ENCODE measurements at regions of chr16 and their contacts with region 1.

Region 1: DNA sequence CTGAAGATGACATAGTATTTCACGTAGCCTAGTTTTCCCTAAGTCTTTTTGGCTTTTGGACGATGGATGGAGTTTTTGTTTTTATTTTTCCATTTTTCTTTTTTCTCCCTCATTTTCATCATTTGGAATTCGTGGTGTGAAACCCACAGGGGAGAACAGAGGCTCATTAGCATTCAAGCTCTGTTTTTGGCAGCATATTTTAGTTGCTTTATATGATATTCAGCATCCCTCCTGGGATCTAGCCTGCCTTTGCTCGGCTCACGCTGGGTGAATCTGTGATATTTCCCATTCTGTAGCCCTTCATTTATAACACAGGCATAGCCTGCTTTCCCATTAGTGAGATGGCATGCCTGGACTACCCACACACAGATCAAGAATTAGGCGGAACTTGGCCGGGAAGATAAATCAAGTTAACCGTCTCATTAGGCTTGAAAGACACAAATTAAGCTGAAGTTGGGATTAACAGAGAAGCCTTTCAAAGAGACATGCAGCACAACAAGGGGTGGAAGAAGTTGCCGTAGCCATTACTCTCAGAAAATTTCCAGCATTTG is 20.1 kb upstream of the CLEC19A start:
- DNase-seq: no peak
- ATAC-seq: no peak
- H3K4me3 ChIP-seq: no peak overlapping the region
- H3K27ac ChIP-seq: no peak overlapping the region
- H3K4me1 ChIP-seq: no peaks in the 10 kb centered on the region
- H3K27me3 ChIP-seq: no peaks in the 10 kb centered on the region
- CTCF ChIP-seq: no peak
- POLR2A ChIP-seq: no peak
- RAD21 ChIP-seq: no peak

Region 2: GRCh38 chr16:19196871-19197270 is 68.6 kb before region 1 on chr16:
- CTCF ChIA-PET with region 1: no interaction called
- POLR2A ChIA-PET with region 1: no interaction called
- dilution Hi-C with region 1: no loop called
- in situ Hi-C with region 1: no loop called
- intact Hi-C with region 1: loop called (anchors 10 kb)
- DNase-seq: no peak
- ATAC-seq: no peak
- H3K4me3 ChIP-seq: no peak overlapping the region
- H3K27ac ChIP-seq: no peak overlapping the region
- H3K4me1 ChIP-seq: 0 out of 2 replicates have a peak, but pooled peaks cover 2% of the 10 kb centered on the region
- H3K27me3 ChIP-seq: no peaks in the 10 kb centered on the region; the same call in 1 of the 2 replicates
- CTCF ChIP-seq: no peak
- POLR2A ChIP-seq: no peak
- RAD21 ChIP-seq: no peak

Region 3: GRCh38 chr16:19223235-19224170 is 42.0 kb before region 1 on chr16:
- CTCF ChIA-PET with region 1: no interaction called
- POLR2A ChIA-PET with region 1: no interaction called
- dilution Hi-C with region 1: no loop called
- in situ Hi-C with region 1: no loop called
- intact Hi-C with region 1: no loop called
- DNase-seq: peak; percentile 4
- ATAC-seq: no peak
- H3K4me3 ChIP-seq: no peak overlapping the region
- H3K27ac ChIP-seq: no peak overlapping the region
- H3K4me1 ChIP-seq: peaks cover 4% of the 10 kb centered on the region
- H3K27me3 ChIP-seq: peaks cover 2% of the 10 kb centered on the region; the same call in 1 of the 2 replicates
- CTCF ChIP-seq: peak; percentile 33
- POLR2A ChIP-seq: no peak
- RAD21 ChIP-seq: no peak

Measured in IMR-90 (cell line).